Activated CD8-positive, alpha-beta T cell treated with anti-CD3 and anti-CD28 coated beads, Interleukin-2, amount 10 ng/mL, durations not matched to agents 7 days and 5 days (primary cell): ENCODE measurements at regions of chr1 and their contacts with region 1.

Region 1: GRCh38 chr1:23951571-23952095 is 8.0 kb upstream of the PNRC2 start:
- DNase-seq: no peak
- ATAC-seq: no peak
- H3K4me3 Mint-ChIP-seq: no peak overlapping the region
- H3K27ac Mint-ChIP-seq: no peak overlapping the region
- H3K4me1 Mint-ChIP-seq: peaks cover 18% of the 10 kb centered on the region
- H3K27me3 Mint-ChIP-seq: peaks cover 4% of the 10 kb centered on the region

Region 2: GRCh38 chr1:24015221-24016210 is 63.9 kb after region 1 on chr1:
- CTCF ChIA-PET with region 1: no interaction called
- POLR2A ChIA-PET with region 1: no interaction called
- DNase-seq: no peak
- ATAC-seq: no peak
- H3K4me3 Mint-ChIP-seq: no peak overlapping the region
- H3K27ac Mint-ChIP-seq: no peak overlapping the region
- H3K4me1 Mint-ChIP-seq: no peaks in the 10 kb centered on the region
- H3K27me3 Mint-ChIP-seq: peaks cover 14% of the 10 kb centered on the region

Region 3: GRCh38 chr1:24027838-24028468 is 76.3 kb after region 1 on chr1:
- CTCF ChIA-PET with region 1: interaction called, 11 read pairs
- POLR2A ChIA-PET with region 1: no interaction called
- DNase-seq: no peak
- ATAC-seq: peak; percentile 42
- H3K4me3 Mint-ChIP-seq: no peak overlapping the region
- H3K27ac Mint-ChIP-seq: no peak overlapping the region
- H3K4me1 Mint-ChIP-seq: no peaks in the 10 kb centered on the region
- H3K27me3 Mint-ChIP-seq: no peaks in the 10 kb centered on the region

Region 4: DNA sequence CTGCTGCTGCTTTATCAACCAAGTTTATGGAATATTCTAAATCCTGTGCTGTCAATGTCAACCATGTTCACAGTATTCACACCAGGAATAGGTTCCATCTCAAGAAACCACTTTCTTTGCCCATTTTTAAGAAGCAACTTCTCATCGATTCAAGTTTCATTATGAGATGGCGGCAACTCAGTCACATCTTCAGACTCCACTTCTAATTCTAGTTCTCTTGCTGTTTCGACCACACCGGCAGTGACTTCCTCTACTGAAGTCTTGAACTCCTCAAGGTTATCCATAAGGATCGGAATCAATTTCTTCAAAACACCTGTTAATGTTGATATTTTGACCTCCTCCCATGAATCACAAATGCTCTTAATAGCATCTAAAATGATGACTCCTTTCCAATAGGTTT is 275.1 kb after region 1 on chr1:
- CTCF ChIA-PET with region 1: no interaction called
- POLR2A ChIA-PET with region 1: no interaction called
- DNase-seq: no peak
- ATAC-seq: no peak
- H3K4me3 Mint-ChIP-seq: no peak overlapping the region
- H3K27ac Mint-ChIP-seq: no peak overlapping the region
- H3K4me1 Mint-ChIP-seq: no peaks in the 10 kb centered on the region
- H3K27me3 Mint-ChIP-seq: peaks cover 9% of the 10 kb centered on the region